Esophagus muscularis mucosa (tissue), 4 donors: ENCODE measurements at regions of chr3 and their contacts with region 1.

Region 1: GRCh38 chr3:19891740-19892139 is 42.3 kb downstream of the EFHB start:
- DNase-seq: no peak
- H3K4me3 ChIP-seq: no peak overlapping the region
- H3K27ac ChIP-seq: no peak overlapping the region
- H3K4me1 ChIP-seq: peaks cover 11 to 20% (median 17%) of the 10 kb centered on the region in 4 donors
- H3K27me3 ChIP-seq: no peaks in the 10 kb centered on the region
- CTCF ChIP-seq: no peak
- EP300 ChIP-seq: no peak
- POLR2A ChIP-seq: no peak

Region 2: GRCh38 chr3:19940638-19941037 is 48.9 kb after region 1 on chr3:
- intact Hi-C with region 1: loop called (anchors 5 kb)
- DNase-seq: no peak
- H3K4me3 ChIP-seq: no peak overlapping the region
- H3K27ac ChIP-seq: no peak overlapping the region
- H3K4me1 ChIP-seq: peaks cover 0 to 2% (median 0%) of the 10 kb centered on the region in 4 donors
- H3K27me3 ChIP-seq: no peaks in the 10 kb centered on the region
- CTCF ChIP-seq: no peak
- EP300 ChIP-seq: no peak
- POLR2A ChIP-seq: no peak